Mammary epithelial cell (primary cell): ENCODE measurements at regions of chr12 and their contacts with region 1.

Region 1: GRCh38 chr12:54324617-54325441 is at the start of gene COPZ1:
- DNase-seq: peak; percentile 100
- H3K4me3 ChIP-seq: peak within 1 kb of the TSS; percentile 60 to 80 (median 75)
- H3K27ac ChIP-seq: peak within 1 kb of the TSS; percentile 91
- H3K4me1 ChIP-seq: peaks cover 12% of the 10 kb centered on the region
- H3K27me3 ChIP-seq: no peaks in the 10 kb centered on the region
- CTCF ChIP-seq: peak; percentile 73 to 85
- total RNA-seq, gene COPZ1: 113 to 155 TPM

Region 2: GRCh38 chr12:54220092-54220557 is 104.7 kb before region 1 on chr12:
- CTCF ChIA-PET with region 1: interaction called, 7 read pairs
- dilution Hi-C with region 1: loop called (anchors 5 kb)
- in situ Hi-C with region 1: no loop called
- intact Hi-C with region 1: loop called (anchors 1 kb)
- DNase-seq: peak; percentile 79
- H3K4me3 ChIP-seq: no peak overlapping the region
- H3K27ac ChIP-seq: no peak overlapping the region
- H3K4me1 ChIP-seq: peaks cover 44% of the 10 kb centered on the region
- H3K27me3 ChIP-seq: no peaks in the 10 kb centered on the region
- CTCF ChIP-seq: peak; percentile 79 to 86

Region 3: GRCh38 chr12:54294152-54294952 is 30.5 kb before region 1 on chr12:
- CTCF ChIA-PET with region 1: interaction called, 10 read pairs
- dilution Hi-C with region 1: no loop called
- in situ Hi-C with region 1: no loop called
- intact Hi-C with region 1: loop called (anchors 1 kb)
- DNase-seq: no peak
- H3K4me3 ChIP-seq: no peak overlapping the region
- H3K27ac ChIP-seq: no peak overlapping the region
- H3K4me1 ChIP-seq: peaks cover under 1% of the 10 kb centered on the region
- H3K27me3 ChIP-seq: no peaks in the 10 kb centered on the region
- CTCF ChIP-seq: peak; percentile 96

Region 4: DNA sequence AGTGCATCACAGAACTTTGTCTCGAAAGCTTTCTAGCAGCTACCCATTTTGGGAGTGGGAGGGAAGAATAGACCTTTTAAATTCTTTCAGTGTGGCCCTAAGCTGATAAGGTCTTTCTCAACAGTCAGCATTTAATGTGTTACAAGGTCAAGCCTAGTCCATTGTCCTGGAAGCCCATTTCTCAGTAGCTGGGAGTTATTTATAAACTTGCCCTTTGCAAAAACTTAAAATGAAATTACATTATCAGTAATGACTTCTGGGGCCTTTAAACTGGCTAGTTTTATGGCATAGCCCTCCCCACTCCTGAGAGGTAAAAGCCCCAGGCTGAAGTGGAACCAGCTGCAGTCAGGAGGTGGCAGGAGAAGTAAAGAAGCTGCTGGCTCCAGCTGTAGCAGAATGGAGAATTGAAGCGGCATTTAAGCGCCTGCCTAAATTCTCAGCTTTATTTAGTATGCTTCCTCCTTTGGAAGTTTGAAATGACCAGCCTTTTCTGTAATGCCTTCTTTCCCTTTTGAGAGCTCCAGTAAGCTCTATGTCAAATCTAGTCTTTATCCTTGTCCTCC is 12.5 kb after region 1 on chr12:
- CTCF ChIA-PET with region 1: interaction called, 12 read pairs
- dilution Hi-C with region 1: no loop called
- in situ Hi-C with region 1: no loop called
- intact Hi-C with region 1: no loop called
- DNase-seq: no peak
- H3K4me3 ChIP-seq: no peak overlapping the region
- H3K27ac ChIP-seq: no peak overlapping the region
- H3K4me1 ChIP-seq: no peaks in the 10 kb centered on the region
- H3K27me3 ChIP-seq: no peaks in the 10 kb centered on the region
- CTCF ChIP-seq: no peak

Region 5: GRCh38 chr12:54368709-54369583 is 44.1 kb after region 1 on chr12:
- CTCF ChIA-PET with region 1: no interaction called
- dilution Hi-C with region 1: no loop called
- in situ Hi-C with region 1: no loop called
- intact Hi-C with region 1: loop called (anchors 2 kb)
- DNase-seq: peak; percentile 65
- H3K4me3 ChIP-seq: no peak overlapping the region
- H3K27ac ChIP-seq: no peak overlapping the region
- H3K4me1 ChIP-seq: peaks cover 32% of the 10 kb centered on the region
- H3K27me3 ChIP-seq: no peaks in the 10 kb centered on the region
- CTCF ChIP-seq: peak; percentile 87 to 89

Region 6: DNA sequence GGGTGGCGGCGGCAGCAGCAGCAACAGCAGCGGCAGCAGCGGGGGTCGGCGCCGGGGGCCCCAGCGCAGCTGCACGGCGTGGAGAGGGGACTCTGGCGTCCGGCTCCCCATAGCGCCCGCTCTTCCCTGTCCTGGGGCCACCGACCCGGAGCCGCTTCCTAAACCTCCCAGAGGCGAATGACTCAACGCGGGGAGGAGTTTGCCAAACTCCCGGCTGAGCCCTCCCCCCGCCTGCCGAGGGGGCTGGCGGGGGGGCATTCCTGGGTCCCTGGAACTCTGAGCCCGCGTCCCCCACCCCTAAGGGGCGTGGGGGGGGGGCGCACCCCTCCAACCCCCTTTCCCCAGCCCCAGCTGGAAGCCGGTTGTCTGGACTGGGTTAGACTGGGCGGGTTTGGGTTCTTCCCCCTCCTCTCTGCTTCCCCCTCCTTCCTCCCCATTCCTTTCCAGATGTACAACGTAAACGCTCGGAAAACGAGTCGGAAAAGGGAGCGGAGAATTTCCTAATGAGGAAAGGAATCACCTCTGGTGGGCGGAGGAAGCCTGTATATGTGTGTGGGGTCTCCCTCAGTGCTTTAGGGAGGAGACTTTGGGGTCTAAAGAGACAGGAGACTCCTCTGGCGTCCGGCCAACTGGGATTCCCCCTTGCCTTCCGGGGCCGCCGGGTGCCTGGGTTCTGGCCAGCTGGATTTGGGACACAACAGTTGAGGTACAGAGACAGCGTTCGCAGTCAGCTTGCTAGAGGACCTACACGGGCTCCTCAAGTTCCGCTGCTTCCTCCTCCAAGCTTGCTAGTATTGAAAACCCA is 94.5 kb after region 1 on chr12 and contains the start of gene ITGA5:
- CTCF ChIA-PET with region 1: no interaction called
- dilution Hi-C with region 1: no loop called
- in situ Hi-C with region 1: no loop called
- intact Hi-C with region 1: no loop called
- DNase-seq: peak; percentile 76
- H3K4me3 ChIP-seq: peak within 1 kb of the TSS; percentile 74 to 87 (median 82)
- H3K27ac ChIP-seq: peak within 1 kb of the TSS; percentile 66
- H3K4me1 ChIP-seq: peaks cover 56% of the 10 kb centered on the region
- H3K27me3 ChIP-seq: no peaks in the 10 kb centered on the region
- CTCF ChIP-seq: no peak
- total RNA-seq, gene ITGA5: 74.2 to 128 TPM

Region 7: GRCh38 chr12:54650409-54650808 is 325.6 kb after region 1 on chr12:
- CTCF ChIA-PET with region 1: no interaction called
- dilution Hi-C with region 1: no loop called
- in situ Hi-C with region 1: no loop called
- intact Hi-C with region 1: no loop called
- DNase-seq: peak; percentile 36
- H3K4me3 ChIP-seq: no peak overlapping the region
- H3K27ac ChIP-seq: no peak overlapping the region
- H3K4me1 ChIP-seq: no peaks in the 10 kb centered on the region
- H3K27me3 ChIP-seq: no peaks in the 10 kb centered on the region
- CTCF ChIP-seq: no peak